Endothelial cell of umbilical vein (primary cell): ENCODE measurements at regions of chr4 and their contacts with region 1.

Region 1: DNA sequence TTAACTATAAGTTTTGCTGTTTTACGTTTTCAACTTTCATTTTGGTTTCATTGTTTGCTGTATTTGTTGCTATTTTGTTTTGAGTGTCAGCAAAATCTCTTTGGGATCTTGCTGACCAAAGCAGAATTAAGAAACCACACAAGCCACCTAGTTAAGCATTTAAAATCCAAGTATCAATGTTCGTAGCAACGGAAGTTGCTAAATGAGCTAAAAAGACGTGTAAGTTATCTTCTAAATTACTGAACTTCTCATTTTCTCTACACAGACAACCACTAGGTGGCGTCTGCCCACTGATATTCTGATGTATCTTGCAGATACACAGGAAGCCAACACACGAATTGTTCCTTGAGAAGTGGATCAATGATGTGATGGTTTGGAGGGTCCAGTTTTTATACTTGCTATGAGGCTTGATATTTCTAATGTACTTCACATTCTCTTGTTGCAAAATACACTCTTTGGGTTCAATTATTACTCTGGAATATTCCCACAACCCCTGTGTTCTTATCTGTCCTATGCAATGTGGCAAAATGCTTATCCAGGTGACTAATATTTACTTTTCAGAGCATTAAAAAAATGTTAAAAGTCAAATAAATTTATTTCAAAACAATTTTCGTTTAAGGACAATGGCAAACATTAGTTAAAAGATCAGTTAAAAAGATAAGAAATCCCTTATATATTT is 250.5 kb downstream of the TECRL start:
- DNase-seq: peak; percentile 36
- H3K4me3 ChIP-seq: peak overlapping the region in 1 of 3 experiments; percentile 59
- H3K27ac ChIP-seq: no peak overlapping the region
- H3K4me1 ChIP-seq: no peaks in the 10 kb centered on the region
- H3K27me3 ChIP-seq: no peaks in the 10 kb centered on the region
- CTCF ChIP-seq: peak; percentile 58 to 59
- POLR2A ChIP-seq: no peak

Region 2: GRCh38 chr4:64539234-64539849 is 380.6 kb after region 1 on chr4:
- CTCF ChIA-PET with region 1: interaction called, 8 read pairs
- POLR2A ChIA-PET with region 1: no interaction called
- dilution Hi-C with region 1: no loop called
- intact Hi-C with region 1: loop called (anchors 1 kb)
- DNase-seq: peak; percentile 54
- H3K4me3 ChIP-seq: no peak overlapping the region
- H3K27ac ChIP-seq: no peak overlapping the region
- H3K4me1 ChIP-seq: no peaks in the 10 kb centered on the region
- H3K27me3 ChIP-seq: no peaks in the 10 kb centered on the region
- CTCF ChIP-seq: peak; percentile 42 to 61
- POLR2A ChIP-seq: no peak

Region 3: DNA sequence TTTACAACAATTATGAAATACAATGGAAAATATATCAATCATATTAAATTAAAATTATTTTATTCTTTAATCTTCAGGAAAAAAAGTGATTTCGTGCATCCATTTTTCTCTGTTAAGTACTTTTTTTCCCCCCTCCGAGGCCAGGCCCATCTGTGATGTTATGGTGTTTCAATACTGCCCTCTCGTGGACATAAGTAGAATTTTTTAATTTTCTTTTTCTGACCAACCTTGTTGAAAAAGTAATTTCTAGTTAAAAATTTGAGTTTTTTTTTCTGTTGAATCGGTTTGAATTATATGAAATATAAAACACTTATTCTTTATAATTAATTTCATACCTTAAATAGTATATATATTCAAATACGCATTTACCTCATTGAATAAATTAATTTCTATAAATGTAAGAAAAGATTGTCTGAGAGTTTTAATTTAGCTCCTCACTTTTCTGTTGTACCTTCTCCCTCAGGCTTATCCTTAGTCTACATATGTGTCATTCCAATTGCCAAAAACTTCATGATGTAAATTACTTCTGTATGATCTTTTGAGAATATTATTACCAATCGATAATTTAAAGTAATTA is 426.3 kb after region 1 on chr4:
- CTCF ChIA-PET with region 1: no interaction called
- POLR2A ChIA-PET with region 1: no interaction called
- dilution Hi-C with region 1: no loop called
- intact Hi-C with region 1: loop called (anchors 1 kb)
- DNase-seq: peak; percentile 17
- H3K4me3 ChIP-seq: no peak overlapping the region
- H3K27ac ChIP-seq: no peak overlapping the region
- H3K4me1 ChIP-seq: no peaks in the 10 kb centered on the region
- H3K27me3 ChIP-seq: no peaks in the 10 kb centered on the region
- CTCF ChIP-seq: peak; percentile 25 to 39
- POLR2A ChIP-seq: no peak